Gastrocnemius medialis (tissue), 4 donors: ENCODE measurements at regions of chr9 and their contacts with region 1.

Region 1: GRCh38 chr9:79129865-79130480 is 441.8 kb upstream of the TLE4 start:
- DNase-seq: peak in 1 of 2 donors; percentile 7
- ATAC-seq: no peak
- H3K4me3 ChIP-seq: no peak overlapping the region
- H3K27ac ChIP-seq: no peak overlapping the region
- H3K4me1 ChIP-seq: no peaks in the 10 kb centered on the region
- H3K27me3 ChIP-seq: no peaks in the 10 kb centered on the region
- CTCF ChIP-seq: peak in 4 of 5 experiments; percentile 30 to 71 (median 61)
- POLR2A ChIP-seq: no peak

Region 2: GRCh38 chr9:78439190-78439865 is 690.6 kb before region 1 on chr9:
- in situ Hi-C with region 1: no loop called
- intact Hi-C with region 1: loop called (anchors 5 kb)
- DNase-seq: peak; percentile 57 to 65
- ATAC-seq: peak; percentile 81
- H3K4me3 ChIP-seq: peak overlapping the region in 1 of 4 donors; percentile 24
- H3K27ac ChIP-seq: no peak overlapping the region
- H3K4me1 ChIP-seq: peaks cover 0 to 12% of the 10 kb centered on the region in 2 donors
- H3K27me3 ChIP-seq: no peaks in the 10 kb centered on the region
- CTCF ChIP-seq: peak; percentile 59 to 93 (median 78)
- POLR2A ChIP-seq: no peak

Region 3: DNA sequence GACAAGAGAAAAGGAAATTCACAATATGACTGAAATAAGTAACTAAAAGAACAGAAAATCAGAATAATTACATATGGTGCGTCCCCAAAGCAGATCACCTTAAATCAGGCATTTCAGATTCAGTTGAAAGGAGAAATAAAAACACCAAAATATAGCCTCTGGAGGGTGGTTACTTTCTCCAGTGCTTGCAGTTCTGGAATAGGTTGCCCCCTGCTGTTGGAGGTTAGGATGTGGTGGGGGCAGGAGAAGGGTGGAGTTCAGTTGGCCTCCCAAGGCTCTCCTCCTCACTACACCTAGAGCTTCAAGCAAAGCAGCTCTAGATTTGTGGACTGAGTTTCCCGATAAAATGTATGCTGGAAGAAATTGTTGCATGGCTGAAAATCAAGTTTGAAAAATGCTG is 103.6 kb after region 1 on chr9:
- in situ Hi-C with region 1: no loop called
- intact Hi-C with region 1: loop called (anchors 5 kb)
- DNase-seq: no peak
- ATAC-seq: no peak
- H3K4me3 ChIP-seq: no peak overlapping the region
- H3K27ac ChIP-seq: no peak overlapping the region
- H3K4me1 ChIP-seq: no peaks in the 10 kb centered on the region
- H3K27me3 ChIP-seq: no peaks in the 10 kb centered on the region
- CTCF ChIP-seq: peak in 1 of 5 experiments; percentile 13
- POLR2A ChIP-seq: no peak